Cardiac septum (tissue), 1 donor: ENCODE measurements at regions of chr1 and their contacts with region 1.

Region 1: DNA sequence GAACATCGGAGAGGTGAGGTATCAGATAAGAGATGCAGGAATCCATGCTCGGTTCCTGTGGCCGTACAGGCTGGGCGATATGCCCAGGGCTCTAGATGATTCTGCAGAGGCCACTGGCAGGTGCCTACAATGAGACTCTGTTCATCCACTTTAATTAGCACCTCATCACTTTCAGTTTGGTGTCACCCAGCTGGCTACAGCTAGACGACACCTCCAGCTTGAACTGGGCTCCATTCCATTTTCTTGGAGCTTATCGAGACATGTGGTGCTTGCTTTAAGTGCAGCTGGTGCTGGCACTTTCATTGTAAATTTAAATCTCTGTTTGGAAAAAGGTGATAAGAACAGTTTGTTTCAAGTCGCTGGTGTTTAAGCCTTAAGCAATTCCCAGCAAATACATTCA is 322.5 kb upstream of the ADGRL2 start:
- DNase-seq: peak; percentile 79

Region 2: GRCh38 chr1:81314513-81315233 is 163.5 kb before region 1 on chr1:
- intact Hi-C with region 1: loop called (anchors 5 kb)
- DNase-seq: no peak

Region 3: DNA sequence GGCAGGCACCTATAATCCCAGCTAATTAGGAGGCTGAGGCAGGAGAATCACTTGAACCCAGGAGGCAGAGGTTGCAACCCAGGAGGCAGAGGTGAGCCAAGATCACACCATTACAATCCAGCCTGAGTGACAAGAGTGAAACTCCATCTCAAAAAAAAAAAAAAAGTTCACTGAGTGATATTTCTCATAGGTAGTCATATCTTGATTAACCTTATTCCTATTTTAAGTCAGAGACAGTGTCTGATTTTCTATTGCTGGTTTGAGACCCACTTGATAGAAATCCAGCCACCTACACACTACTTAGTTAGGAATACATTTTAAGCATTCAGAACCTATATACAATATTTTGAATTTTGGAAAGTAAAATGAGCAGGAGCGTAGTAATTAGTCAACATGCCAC is 34.9 kb before region 1 on chr1:
- intact Hi-C with region 1: loop called (anchors 5 kb)
- DNase-seq: no peak

Region 4: DNA sequence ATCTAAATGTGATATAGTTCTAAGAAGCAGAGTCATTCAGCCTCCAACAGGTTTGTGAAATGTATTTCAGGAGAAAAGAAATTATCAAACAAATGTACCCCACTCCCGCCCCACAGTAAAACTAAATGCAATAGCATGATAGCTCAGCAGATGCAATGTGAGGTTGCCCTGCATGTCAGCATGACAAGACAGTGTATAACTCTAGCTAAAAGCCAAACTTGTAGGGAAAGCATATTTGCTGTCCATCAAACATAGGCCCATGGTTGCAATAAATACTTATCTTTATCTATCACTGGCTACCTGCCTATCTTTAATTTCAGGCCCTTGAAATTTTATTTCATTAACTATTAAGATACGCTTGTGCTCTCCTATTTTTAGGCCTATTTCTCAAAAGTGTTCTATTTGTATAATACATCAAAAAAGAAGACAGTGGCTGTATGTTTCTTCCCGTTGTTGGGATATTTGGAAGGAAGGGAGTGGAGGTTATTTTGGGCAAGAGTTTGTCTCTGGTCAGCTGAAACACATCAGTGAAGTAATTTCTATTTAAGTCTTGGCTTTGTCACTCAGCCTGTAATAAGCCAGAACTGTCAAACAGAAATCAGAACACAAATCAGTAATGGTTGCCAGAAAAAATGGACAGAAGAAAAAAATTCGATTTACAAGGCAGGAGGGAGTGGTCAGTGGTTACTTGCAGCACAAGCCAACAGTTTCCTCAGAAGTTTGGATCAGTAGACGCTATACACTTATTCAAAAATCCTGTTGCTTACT is 15.1 kb after region 1 on chr1:
- intact Hi-C with region 1: loop called (anchors 2 kb)
- DNase-seq: no peak

Region 5: DNA sequence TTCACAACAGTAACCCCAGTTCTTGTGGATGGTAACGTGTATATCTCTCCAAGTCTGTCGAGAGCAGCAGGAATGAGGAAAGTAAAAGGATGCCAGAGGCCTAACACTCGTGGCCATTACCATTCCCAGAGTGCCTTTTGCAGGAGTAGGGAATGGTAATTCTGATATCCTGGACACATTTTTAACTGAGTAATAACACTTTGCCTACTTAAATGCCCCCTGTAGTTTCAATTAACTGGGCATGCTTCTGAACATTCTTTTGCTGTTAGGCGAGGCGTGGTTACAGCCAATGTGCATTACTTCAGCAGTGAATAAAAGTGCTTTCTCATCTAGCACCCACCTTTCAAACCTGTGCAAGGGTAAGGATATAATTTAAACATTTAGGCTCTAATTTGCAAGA is 64.0 kb after region 1 on chr1:
- intact Hi-C with region 1: no loop called
- DNase-seq: no peak